GM10248 (cell line): ENCODE measurements at regions of chr1 and their contacts with region 1.

Region 1: DNA sequence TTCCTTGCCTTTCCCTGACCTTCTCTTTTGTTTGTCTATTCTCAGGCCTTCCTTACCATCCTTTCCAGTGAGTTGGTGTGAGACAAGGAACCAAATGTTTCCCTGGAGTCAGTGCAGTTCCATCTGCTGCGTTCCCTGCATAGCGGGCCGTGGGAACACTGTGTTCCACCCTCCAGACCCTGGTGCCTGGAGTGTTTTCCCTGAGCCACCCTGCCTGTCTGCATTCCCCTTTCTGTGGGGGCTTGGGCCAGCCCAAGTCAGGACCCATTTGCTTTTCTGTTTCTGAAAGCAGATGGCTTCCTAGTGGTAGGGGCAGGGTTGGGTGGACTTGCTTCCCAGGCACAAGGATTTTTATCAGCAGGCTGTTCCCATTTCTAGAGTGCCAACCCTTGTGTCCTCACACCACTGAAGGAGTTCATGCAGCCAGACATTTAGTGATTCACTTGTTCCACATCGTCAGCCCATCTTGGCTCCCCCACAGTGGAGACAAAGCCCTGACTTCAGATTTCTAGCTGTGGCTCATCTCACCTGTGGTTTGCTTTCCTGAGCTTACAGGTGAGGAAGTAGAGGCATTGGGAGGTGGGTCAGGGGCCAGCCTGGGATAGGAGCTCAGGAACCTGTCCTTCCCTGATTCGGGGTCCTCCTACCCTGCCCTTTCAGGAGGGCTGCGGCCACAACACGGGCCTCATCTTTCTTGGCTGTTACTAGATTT is 14.1 kb upstream of the MYOG start:
- DNase-seq: no peak
- CTCF ChIP-seq: no peak

Region 2: DNA sequence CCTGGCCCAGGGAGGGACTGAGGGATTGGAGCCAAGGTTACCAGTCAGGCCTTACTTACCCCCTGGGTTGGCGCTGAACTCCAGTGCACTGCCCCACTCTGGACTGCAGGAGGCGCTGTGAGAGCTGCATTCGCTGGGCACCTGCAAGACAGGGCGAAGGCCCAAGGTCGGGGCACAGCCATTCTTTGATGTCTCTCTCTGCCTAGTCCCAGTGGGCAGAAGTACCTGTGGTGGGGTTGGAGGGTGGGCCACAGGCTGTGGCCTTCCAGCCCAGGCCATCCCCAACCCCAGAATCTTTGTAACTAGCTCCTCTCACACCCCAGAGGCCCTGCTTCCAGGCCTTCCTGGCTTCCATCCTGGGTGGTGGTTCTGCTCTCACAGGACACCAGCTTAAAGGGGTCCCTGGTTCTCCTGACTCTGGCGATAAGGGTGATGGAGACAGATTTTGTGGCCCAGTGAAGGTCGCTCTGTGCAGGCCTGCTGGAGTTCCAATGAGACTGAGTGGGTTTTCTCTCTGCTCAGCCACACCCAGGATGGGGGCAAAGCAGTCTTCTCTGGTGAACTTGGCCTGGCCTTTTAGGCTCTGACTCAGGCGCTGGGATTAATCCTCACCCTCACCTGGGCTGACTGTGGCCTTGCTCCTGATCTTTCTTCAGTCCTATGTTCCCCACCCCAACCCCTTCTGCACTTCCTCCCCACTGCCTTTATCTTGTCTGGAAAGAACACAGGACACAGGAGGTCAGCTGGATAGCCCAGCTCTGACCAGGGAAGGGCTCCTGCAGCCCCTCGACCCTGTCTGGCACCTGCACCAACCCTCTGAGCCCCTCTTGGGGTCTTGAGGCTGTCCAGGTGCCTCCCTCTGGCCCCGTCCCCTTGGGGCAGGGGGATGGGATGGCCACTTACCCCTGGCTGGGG is 15.1 kb before region 1 on chr1:
- CTCF ChIA-PET with region 1: interaction called, 18 read pairs
- POLR2A ChIA-PET with region 1: no interaction called
- DNase-seq: peak; percentile 69
- CTCF ChIP-seq: peak; percentile 49